PC-3 (cell line): ENCODE measurements at regions of chr4 and their contacts with region 1.

Region 1: GRCh38 chr4:72295966-72296557 is 264.3 kb downstream of the NPFFR2 start:
- DNase-seq: peak; percentile 90
- ATAC-seq: peak; percentile 93
- H3K4me3 ChIP-seq: no peak overlapping the region
- H3K27ac ChIP-seq: no peak overlapping the region
- H3K4me1 ChIP-seq: no peaks in the 10 kb centered on the region
- H3K27me3 ChIP-seq: no peaks in the 10 kb centered on the region
- CTCF ChIP-seq: peak; percentile 95

Region 2: DNA sequence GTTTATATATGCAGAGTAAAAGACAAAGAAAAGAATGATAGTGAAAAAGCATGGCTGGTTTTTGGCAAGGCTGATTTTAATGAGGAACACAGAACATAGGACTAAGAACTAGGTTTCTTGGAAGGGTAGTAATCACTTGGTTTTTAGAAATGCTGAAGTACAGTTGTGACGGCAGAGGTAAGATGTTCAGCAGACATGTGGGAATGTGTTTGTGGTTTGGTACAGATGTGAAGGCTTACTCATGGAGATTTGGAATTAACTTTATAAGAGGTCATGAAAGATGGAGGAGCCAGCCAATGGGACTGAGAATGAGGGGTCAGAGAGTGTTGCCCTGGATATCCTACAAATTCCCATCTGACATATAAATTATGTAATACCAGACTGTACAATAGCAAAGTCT is 20.7 kb before region 1 on chr4:
- CTCF ChIA-PET with region 1: no interaction called
- POLR2A ChIA-PET with region 1: no interaction called
- intact Hi-C with region 1: no loop called
- DNase-seq: no peak
- ATAC-seq: no peak
- H3K4me3 ChIP-seq: no peak overlapping the region
- H3K27ac ChIP-seq: no peak overlapping the region
- H3K4me1 ChIP-seq: no peaks in the 10 kb centered on the region
- H3K27me3 ChIP-seq: no peaks in the 10 kb centered on the region
- CTCF ChIP-seq: no peak

Region 3: GRCh38 chr4:72468904-72469502 is 172.9 kb after region 1 on chr4:
- CTCF ChIA-PET with region 1: no interaction called
- POLR2A ChIA-PET with region 1: no interaction called
- intact Hi-C with region 1: loop called (anchors 1 kb)
- DNase-seq: peak; percentile 83
- ATAC-seq: peak; percentile 29; the same call in 1 of the 2 replicates
- H3K4me3 ChIP-seq: no peak overlapping the region
- H3K27ac ChIP-seq: no peak overlapping the region
- H3K4me1 ChIP-seq: no peaks in the 10 kb centered on the region
- H3K27me3 ChIP-seq: no peaks in the 10 kb centered on the region
- CTCF ChIP-seq: peak; percentile 92

Region 4: GRCh38 chr4:72496112-72496511 is 200.1 kb after region 1 on chr4:
- CTCF ChIA-PET with region 1: interaction called, 5 read pairs
- POLR2A ChIA-PET with region 1: no interaction called
- intact Hi-C with region 1: loop called (anchors 1 kb)
- DNase-seq: peak; percentile 71
- ATAC-seq: peak; percentile 87
- H3K4me3 ChIP-seq: no peak overlapping the region
- H3K27ac ChIP-seq: no peak overlapping the region
- H3K4me1 ChIP-seq: no peaks in the 10 kb centered on the region
- H3K27me3 ChIP-seq: no peaks in the 10 kb centered on the region
- CTCF ChIP-seq: peak; percentile 79

Region 5: DNA sequence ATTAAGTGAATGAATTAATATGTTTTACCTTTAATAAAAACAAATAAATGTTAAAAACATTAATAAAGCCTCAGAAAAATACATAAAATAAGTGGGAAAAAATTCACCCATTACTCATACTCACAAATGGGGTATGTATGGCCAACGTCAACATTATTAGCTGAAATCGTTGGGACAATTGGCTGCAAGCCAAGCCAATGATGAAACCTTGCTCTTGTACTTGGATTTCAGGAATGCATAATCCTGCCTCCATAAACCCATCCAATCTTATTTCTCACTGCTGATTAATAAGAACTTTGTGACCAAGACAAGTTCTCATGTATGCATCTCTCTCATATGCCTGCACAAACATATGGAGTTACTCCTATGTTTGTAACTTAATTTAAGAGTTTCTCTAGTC is 308.3 kb after region 1 on chr4:
- CTCF ChIA-PET with region 1: no interaction called
- POLR2A ChIA-PET with region 1: no interaction called
- intact Hi-C with region 1: no loop called
- DNase-seq: peak; percentile 83
- ATAC-seq: no peak
- H3K4me3 ChIP-seq: no peak overlapping the region
- H3K27ac ChIP-seq: no peak overlapping the region
- H3K4me1 ChIP-seq: peaks cover 7% of the 10 kb centered on the region; the same call in 1 of the 2 replicates
- H3K27me3 ChIP-seq: no peaks in the 10 kb centered on the region
- CTCF ChIP-seq: no peak

Region 6: GRCh38 chr4:72886602-72887001 is 590.5 kb after region 1 on chr4:
- CTCF ChIA-PET with region 1: no interaction called
- POLR2A ChIA-PET with region 1: no interaction called
- intact Hi-C with region 1: loop called (anchors 2 kb)
- DNase-seq: peak; percentile 50
- ATAC-seq: no peak
- H3K4me3 ChIP-seq: no peak overlapping the region
- H3K27ac ChIP-seq: no peak overlapping the region
- H3K4me1 ChIP-seq: no peaks in the 10 kb centered on the region
- H3K27me3 ChIP-seq: no peaks in the 10 kb centered on the region
- CTCF ChIP-seq: peak; percentile 90

Region 7: GRCh38 chr4:73019462-73020047 is 723.5 kb after region 1 on chr4:
- CTCF ChIA-PET with region 1: no interaction called
- POLR2A ChIA-PET with region 1: no interaction called
- intact Hi-C with region 1: loop called (anchors 2 kb)
- DNase-seq: peak; percentile 78
- ATAC-seq: no peak
- H3K4me3 ChIP-seq: no peak overlapping the region
- H3K27ac ChIP-seq: no peak overlapping the region
- H3K4me1 ChIP-seq: no peaks in the 10 kb centered on the region
- H3K27me3 ChIP-seq: peaks cover 11% of the 10 kb centered on the region
- CTCF ChIP-seq: peak; percentile 95